IMR-90 (cell line): ENCODE measurements at regions of chr19 and their contacts with region 1.

Region 1: GRCh38 chr19:33406521-33407139 is 33.1 kb downstream of the CEBPG start:
- DNase-seq: peak; percentile 39
- ATAC-seq: peak; percentile 95
- H3K4me3 ChIP-seq: no peak overlapping the region
- H3K27ac ChIP-seq: no peak overlapping the region
- H3K4me1 ChIP-seq: no peaks in the 10 kb centered on the region
- H3K27me3 ChIP-seq: no peaks in the 10 kb centered on the region
- CTCF ChIP-seq: peak; percentile 90
- POLR2A ChIP-seq: no peak
- RAD21 ChIP-seq: peak; percentile 95

Region 2: GRCh38 chr19:33241530-33242101 is 165.0 kb before region 1 on chr19:
- CTCF ChIA-PET with region 1: interaction called, 3 read pairs
- POLR2A ChIA-PET with region 1: no interaction called
- dilution Hi-C with region 1: no loop called
- in situ Hi-C with region 1: loop called (anchors 5 kb)
- intact Hi-C with region 1: loop called (anchors 1 kb)
- DNase-seq: no peak
- ATAC-seq: peak; percentile 69
- H3K4me3 ChIP-seq: no peak overlapping the region
- H3K27ac ChIP-seq: no peak overlapping the region
- H3K4me1 ChIP-seq: no peaks in the 10 kb centered on the region
- H3K27me3 ChIP-seq: peaks cover 13% of the 10 kb centered on the region; the same call in 1 of the 2 replicates
- CTCF ChIP-seq: peak; percentile 53
- POLR2A ChIP-seq: no peak
- RAD21 ChIP-seq: peak; percentile 63

Region 3: DNA sequence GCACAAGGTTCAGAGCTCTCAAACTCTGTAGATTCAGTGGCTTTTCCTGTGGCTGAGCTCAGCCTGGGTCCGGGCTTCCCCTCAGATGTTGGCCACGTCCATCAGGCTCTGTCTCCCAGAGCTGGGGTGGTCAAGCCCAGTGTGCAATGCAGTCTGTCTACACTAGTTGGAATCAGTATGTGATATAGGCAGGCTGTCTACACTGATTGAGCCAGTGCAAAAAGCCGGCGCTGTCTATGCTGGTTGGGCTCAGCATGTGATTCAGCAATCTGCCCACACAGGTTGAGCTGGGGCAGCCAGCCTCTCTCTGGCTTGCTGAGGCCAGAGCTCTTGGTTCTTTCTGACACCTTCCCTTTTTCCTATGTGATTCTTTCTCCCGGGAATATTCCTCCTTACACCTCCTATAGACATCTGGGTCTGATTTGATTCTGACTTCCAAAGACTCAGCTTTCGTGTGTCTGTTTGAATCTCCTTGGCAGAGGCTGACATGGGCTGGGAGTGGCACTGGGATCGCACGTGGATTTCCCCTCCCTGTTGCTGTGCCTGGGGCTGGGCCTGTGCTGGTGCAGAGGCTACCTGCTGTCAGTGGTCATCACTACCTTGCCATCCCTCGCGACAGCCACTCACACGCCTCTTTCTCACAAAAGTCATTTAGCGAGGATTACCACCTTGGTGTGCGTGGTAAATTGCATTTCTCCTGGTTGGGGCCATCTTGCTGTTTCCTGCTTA is 224.4 kb after region 1 on chr19:
- CTCF ChIA-PET with region 1: no interaction called
- POLR2A ChIA-PET with region 1: no interaction called
- dilution Hi-C with region 1: no loop called
- in situ Hi-C with region 1: no loop called
- intact Hi-C with region 1: no loop called
- DNase-seq: no peak
- ATAC-seq: no peak
- H3K4me3 ChIP-seq: no peak overlapping the region
- H3K27ac ChIP-seq: no peak overlapping the region
- H3K4me1 ChIP-seq: no peaks in the 10 kb centered on the region
- H3K27me3 ChIP-seq: no peaks in the 10 kb centered on the region
- CTCF ChIP-seq: no peak
- POLR2A ChIP-seq: no peak
- RAD21 ChIP-seq: no peak

Region 4: GRCh38 chr19:33698664-33699435 is 292.2 kb after region 1 on chr19:
- CTCF ChIA-PET with region 1: no interaction called
- POLR2A ChIA-PET with region 1: no interaction called
- dilution Hi-C with region 1: no loop called
- in situ Hi-C with region 1: no loop called
- intact Hi-C with region 1: no loop called
- DNase-seq: no peak
- ATAC-seq: no peak
- H3K4me3 ChIP-seq: no peak overlapping the region
- H3K27ac ChIP-seq: no peak overlapping the region
- H3K4me1 ChIP-seq: no peaks in the 10 kb centered on the region
- H3K27me3 ChIP-seq: no peaks in the 10 kb centered on the region
- CTCF ChIP-seq: no peak
- POLR2A ChIP-seq: no peak
- RAD21 ChIP-seq: no peak